Right cardiac atrium (tissue), 5 donors: ENCODE measurements at regions of chr2 and their contacts with region 1.

Region 1: GRCh38 chr2:17851731-17852585 is 26.5 kb upstream of the KCNS3 start:
- DNase-seq: peak; percentile 36 to 64 (median 53)
- ATAC-seq: peak; percentile 71 to 73
- H3K4me3 ChIP-seq: no peak overlapping the region
- H3K27ac ChIP-seq: no peak overlapping the region
- H3K4me1 ChIP-seq: no peaks in the 10 kb centered on the region
- H3K27me3 ChIP-seq: no peaks in the 10 kb centered on the region

Region 2: GRCh38 chr2:17719562-17720371 is 132.2 kb before region 1 on chr2:
- intact Hi-C with region 1: no loop called
- DNase-seq: no peak
- ATAC-seq: no peak
- H3K4me3 ChIP-seq: no peak overlapping the region
- H3K27ac ChIP-seq: no peak overlapping the region
- H3K4me1 ChIP-seq: no peaks in the 10 kb centered on the region
- H3K27me3 ChIP-seq: no peaks in the 10 kb centered on the region

Region 3: DNA sequence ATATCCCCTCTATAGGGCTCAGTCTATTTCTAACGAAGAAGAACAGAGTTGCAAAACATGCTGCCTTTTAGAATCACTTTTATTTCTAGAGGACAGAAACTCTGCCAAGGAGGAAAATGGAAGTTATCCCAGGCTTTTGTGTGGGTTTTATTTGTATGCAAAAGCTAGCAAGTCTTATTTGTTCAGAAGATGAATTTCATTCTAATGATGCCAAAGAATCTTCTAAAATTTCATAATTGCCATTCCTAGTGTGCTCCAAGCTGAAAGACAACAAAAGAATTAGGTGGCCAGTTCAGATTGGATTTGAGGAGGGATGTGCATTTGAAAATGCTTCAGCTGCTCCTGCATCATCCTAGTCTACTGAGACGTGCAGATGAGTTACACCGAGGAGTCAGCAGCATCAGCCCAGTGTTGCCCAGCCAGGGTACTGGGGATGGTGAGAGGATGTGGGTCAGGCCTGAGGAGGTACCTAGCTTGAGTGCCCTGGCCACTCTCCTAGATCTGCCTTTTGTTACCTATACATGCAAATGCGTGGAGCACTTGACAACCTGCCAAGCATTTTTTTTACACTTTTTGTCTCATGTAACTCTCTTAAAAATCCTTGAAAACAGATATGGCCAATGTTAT is 106.6 kb after region 1 on chr2:
- intact Hi-C with region 1: no loop called
- DNase-seq: no peak
- ATAC-seq: no peak
- H3K4me3 ChIP-seq: no peak overlapping the region
- H3K27ac ChIP-seq: no peak overlapping the region
- H3K4me1 ChIP-seq: no peaks in the 10 kb centered on the region
- H3K27me3 ChIP-seq: no peaks in the 10 kb centered on the region

Region 4: DNA sequence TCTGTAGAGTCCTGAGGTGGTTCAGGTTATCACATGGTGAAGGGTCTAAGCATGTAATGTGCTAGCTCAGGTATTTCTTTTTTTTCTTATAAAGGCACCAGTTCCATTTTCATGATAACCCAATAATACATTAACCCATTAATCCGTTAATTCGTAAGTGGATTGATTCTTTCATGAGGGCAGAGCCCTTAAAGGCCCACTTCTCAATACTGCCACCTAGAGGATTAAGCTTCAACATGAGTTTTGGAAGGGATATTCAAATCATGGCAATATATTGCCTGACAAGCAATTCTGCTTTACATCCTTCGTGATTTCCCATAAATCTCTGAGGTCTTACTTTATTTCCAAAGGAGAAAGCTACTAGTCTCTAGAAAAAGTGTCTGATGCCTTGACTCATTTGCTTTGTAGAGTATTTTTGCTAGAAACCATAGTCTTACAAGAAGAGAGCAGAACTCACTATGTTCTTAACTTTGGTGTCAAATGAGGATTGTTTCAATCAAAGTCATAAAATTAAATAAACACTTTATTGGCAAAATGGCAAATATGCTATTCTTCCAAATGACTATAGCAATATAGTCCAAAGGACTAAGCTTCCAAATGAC is 297.8 kb after region 1 on chr2:
- intact Hi-C with region 1: loop called in 3 of 4 experiments (anchors 5 to 10 kb)
- DNase-seq: no peak
- ATAC-seq: no peak
- H3K4me3 ChIP-seq: no peak overlapping the region
- H3K27ac ChIP-seq: no peak overlapping the region
- H3K4me1 ChIP-seq: no peaks in the 10 kb centered on the region
- H3K27me3 ChIP-seq: no peaks in the 10 kb centered on the region

Region 5: DNA sequence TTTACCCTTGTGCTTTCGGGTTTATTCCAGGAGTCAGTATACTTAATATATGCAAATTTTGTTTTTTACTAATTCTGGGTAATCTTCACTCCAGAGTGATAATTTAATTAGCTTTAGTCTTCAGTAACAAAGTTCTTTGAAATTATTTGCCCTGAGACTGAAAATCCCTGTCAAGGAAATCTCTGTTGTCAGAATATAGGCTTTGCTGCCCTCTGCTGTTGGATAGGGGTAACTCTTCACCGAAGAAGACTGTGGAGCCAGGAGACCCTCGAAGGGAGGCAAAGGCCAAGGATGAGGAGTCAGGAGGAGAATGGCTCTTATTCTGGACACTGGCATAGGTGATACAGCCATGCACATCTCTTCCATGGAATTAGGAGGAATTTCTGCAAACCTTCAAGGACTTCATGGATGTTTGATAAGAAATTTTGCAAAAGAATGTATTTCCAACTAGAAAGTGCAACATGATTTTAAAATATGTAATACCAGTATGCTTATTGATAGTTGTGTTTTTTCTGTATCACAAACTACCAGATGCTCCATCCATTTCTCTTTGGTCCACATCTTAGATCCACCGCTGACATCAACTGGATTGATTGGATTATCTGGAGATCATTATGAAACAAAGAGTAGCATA is 526.2 kb after region 1 on chr2:
- intact Hi-C with region 1: loop called (anchors 5 kb)
- DNase-seq: no peak
- ATAC-seq: peak; percentile 43 to 61
- H3K4me3 ChIP-seq: no peak overlapping the region
- H3K27ac ChIP-seq: no peak overlapping the region
- H3K4me1 ChIP-seq: no peaks in the 10 kb centered on the region
- H3K27me3 ChIP-seq: no peaks in the 10 kb centered on the region